H1 (cell line): ENCODE measurements at regions of chr7 and their contacts with region 1.

Region 1: GRCh38 chr7:21767300-21767900 is 178.3 kb downstream of the CDCA7L start:
- DNase-seq: peak in 1 of 2 experiments; percentile 73
- H3K4me3 ChIP-seq: no peak overlapping the region
- H3K27ac ChIP-seq: no peak overlapping the region
- H3K4me1 ChIP-seq: peaks cover 0 to 14% (median 7%) of the 10 kb centered on the region in 4 experiments; a peak in 5 of 7 replicates
- H3K27me3 ChIP-seq: no peaks in the 10 kb centered on the region
- CTCF ChIP-seq: peak; percentile 79 to 100 (median 98)
- EP300 ChIP-seq: no peak
- POLR2A ChIP-seq: no peak
- RAD21 ChIP-seq: peak; percentile 100

Region 2: GRCh38 chr7:21253740-21254687 is 513.4 kb before region 1 on chr7:
- CTCF ChIA-PET with region 1: interaction called, 47 read pairs
- POLR2A ChIA-PET with region 1: no interaction called
- DNase-seq: peak; percentile 38 to 81
- H3K4me3 ChIP-seq: peak overlapping the region in 1 of 4 experiments; percentile 51; a peak in 2 of 8 replicates
- H3K27ac ChIP-seq: no peak overlapping the region
- H3K4me1 ChIP-seq: peaks cover 0 to 9% (median 4%) of the 10 kb centered on the region in 4 experiments; a peak in 4 of 7 replicates
- H3K27me3 ChIP-seq: no peaks in the 10 kb centered on the region
- CTCF ChIP-seq: peak; percentile 61 to 88 (median 86)
- EP300 ChIP-seq: no peak
- POLR2A ChIP-seq: no peak
- RAD21 ChIP-seq: peak; percentile 96 to 97

Region 3: GRCh38 chr7:21568762-21569161 is 198.6 kb before region 1 on chr7:
- CTCF ChIA-PET with region 1: interaction called, 21 read pairs
- POLR2A ChIA-PET with region 1: no interaction called
- DNase-seq: no peak
- H3K4me3 ChIP-seq: no peak overlapping the region
- H3K27ac ChIP-seq: no peak overlapping the region
- H3K4me1 ChIP-seq: no peaks in the 10 kb centered on the region; a peak in 1 of 7 replicates
- H3K27me3 ChIP-seq: no peaks in the 10 kb centered on the region
- CTCF ChIP-seq: peak in 2 of 3 experiments; percentile 22 to 35; a peak in 2 of 4 replicates
- EP300 ChIP-seq: no peak
- POLR2A ChIP-seq: no peak
- RAD21 ChIP-seq: peak; percentile 51 to 66

Region 4: GRCh38 chr7:21731977-21732376 is 35.4 kb before region 1 on chr7:
- CTCF ChIA-PET with region 1: interaction called, 11 read pairs
- POLR2A ChIA-PET with region 1: no interaction called
- DNase-seq: no peak
- H3K4me3 ChIP-seq: no peak overlapping the region
- H3K27ac ChIP-seq: no peak overlapping the region
- H3K4me1 ChIP-seq: no peaks in the 10 kb centered on the region
- H3K27me3 ChIP-seq: peaks cover 0 to 1% (median 0%) of the 10 kb centered on the region in 4 experiments; a peak in 1 of 7 replicates
- CTCF ChIP-seq: no peak
- EP300 ChIP-seq: no peak
- POLR2A ChIP-seq: no peak
- RAD21 ChIP-seq: no peak

Region 5: GRCh38 chr7:21753071-21753470 is 14.3 kb before region 1 on chr7:
- CTCF ChIA-PET with region 1: interaction called, 21 read pairs
- POLR2A ChIA-PET with region 1: no interaction called
- DNase-seq: no peak
- H3K4me3 ChIP-seq: no peak overlapping the region
- H3K27ac ChIP-seq: no peak overlapping the region
- H3K4me1 ChIP-seq: peaks cover 0 to 18% (median 9%) of the 10 kb centered on the region in 4 experiments; a peak in 4 of 7 replicates
- H3K27me3 ChIP-seq: no peaks in the 10 kb centered on the region
- CTCF ChIP-seq: no peak
- EP300 ChIP-seq: no peak
- POLR2A ChIP-seq: no peak
- RAD21 ChIP-seq: no peak

Region 6: DNA sequence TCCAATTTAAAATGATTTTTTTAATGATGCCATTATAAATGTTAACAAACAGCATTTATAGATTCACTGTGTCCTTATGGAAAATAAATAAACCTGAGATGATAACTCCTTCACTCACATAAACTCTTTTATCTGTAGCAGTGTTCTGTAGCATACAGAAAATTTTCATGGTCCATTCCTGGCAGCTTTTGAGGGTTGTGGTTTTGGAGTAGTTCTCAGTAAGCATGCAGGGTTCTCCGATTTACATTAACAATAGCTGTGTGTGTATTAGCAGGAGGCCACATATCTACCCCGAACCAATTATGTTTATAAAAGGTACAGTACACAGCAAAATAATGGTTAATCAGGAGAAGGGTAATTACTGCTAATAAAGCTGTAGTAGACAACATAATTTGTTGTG is 15.6 kb after region 1 on chr7:
- CTCF ChIA-PET with region 1: interaction called, 23 read pairs
- POLR2A ChIA-PET with region 1: no interaction called
- DNase-seq: no peak
- H3K4me3 ChIP-seq: no peak overlapping the region
- H3K27ac ChIP-seq: no peak overlapping the region
- H3K4me1 ChIP-seq: no peaks in the 10 kb centered on the region
- H3K27me3 ChIP-seq: no peaks in the 10 kb centered on the region
- CTCF ChIP-seq: no peak
- EP300 ChIP-seq: no peak
- POLR2A ChIP-seq: no peak
- RAD21 ChIP-seq: no peak